ENCODE measurements at regions of chr16 and their contacts with region 1.

Region 1: GRCh38 chr16:69123910-69124309 is 8.5 kb downstream of the CHTF8 start:
- ATAC-seq: peak in 3 of 8 experiments; percentile 55 to 71 (median 67)
- H3K4me3 ChIP-seq: no peak overlapping the region
- H3K27ac ChIP-seq: no peak overlapping the region
- H3K4me1 ChIP-seq: no peaks in the 10 kb centered on the region

Region 2: GRCh38 chr16:68528686-68529379 is 595.1 kb before region 1 on chr16:
- in situ Hi-C with region 1: loop called in 2 of 9 experiments (anchors 25 kb)
- ATAC-seq: peak; percentile 72 to 84 (median 75)
- H3K4me3 ChIP-seq: peak overlapping the region in 2 of 5 donors; percentile 0 to 1
- H3K27ac ChIP-seq: no peak overlapping the region
- H3K4me1 ChIP-seq: peaks cover 5 to 8% of the 10 kb centered on the region in 2 donors

Region 3: DNA sequence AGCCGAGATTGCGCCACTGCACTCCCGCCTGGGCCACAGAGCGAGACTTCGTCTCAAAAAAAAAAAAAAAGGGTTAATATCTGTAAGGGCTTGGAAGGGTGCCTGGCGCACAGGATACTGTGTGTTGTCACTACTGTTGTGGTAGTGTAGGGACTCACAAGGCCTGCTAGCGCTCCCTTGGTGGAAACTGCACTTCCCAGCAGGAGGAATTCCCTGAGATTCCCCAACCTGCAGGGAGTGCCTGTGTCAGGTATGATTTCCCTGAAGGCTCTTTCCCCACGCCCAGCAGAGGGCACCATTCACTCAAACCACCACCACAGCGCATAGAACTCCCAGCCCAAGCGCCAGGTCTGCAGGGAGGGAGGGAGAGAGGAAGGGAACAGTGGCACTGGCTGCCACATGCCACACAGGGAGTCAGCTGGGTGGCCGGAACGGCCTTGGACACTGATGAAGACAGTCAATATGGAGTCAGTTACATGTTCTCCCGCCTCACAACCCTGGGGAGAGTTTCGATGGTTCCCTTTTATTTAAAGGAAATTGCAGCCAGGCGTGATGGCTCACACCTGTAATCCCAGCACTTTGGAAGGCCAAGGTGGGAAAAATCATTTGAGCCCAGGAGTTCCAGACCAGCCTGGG is 419.6 kb before region 1 on chr16:
- in situ Hi-C with region 1: loop called in 1 of 9 experiments (anchors 25 kb)
- ATAC-seq: peak; percentile 52 to 89 (median 68)
- H3K4me3 ChIP-seq: no peak overlapping the region
- H3K27ac ChIP-seq: no peak overlapping the region
- H3K4me1 ChIP-seq: no peaks in the 10 kb centered on the region

Region 4: DNA sequence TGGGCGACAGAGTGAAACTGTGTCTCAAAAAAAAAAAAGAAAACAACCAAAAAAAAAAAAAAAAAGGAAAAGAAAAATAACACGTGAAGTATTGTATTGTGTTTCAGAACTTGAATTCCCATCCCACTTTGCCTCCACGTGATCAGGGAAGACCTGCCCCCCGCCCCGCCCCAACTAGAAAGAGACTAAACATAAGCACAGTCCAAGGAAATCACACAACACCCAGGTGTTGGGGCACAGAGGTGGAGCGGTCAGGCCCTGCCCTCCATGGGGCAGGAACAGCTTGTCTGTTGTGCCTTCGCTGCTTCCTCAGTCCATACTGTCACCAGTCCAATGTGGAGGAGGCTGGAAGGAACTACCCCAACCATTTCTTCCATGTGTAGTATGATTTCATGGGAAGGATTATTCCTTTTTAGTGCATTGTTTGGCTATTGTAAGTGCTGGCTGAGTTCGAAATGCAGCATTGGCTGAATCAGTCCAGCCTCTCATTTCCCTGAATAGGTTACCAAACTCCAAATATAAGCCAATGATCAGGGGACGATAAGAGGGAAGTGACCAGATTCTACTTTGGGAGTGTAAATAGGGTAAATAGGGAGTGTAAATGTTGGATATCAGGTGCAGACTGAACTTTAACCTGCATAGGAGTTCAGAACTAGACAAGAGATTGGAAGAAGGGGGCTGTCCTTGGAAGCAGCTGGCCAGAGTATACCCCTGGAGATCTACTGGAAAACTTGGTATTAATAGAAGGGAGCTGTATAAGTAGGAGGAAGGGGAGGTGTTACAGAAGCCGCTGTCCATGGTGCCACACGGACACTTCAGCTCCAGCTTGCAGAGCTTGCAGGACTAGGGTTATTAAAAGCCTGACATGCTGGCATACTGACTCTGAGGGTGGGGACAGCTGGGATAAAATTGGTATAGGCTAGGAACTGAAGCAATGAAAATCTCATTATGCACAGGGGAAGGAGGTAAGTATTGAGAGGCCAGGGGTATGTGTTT is 229.9 kb before region 1 on chr16:
- in situ Hi-C with region 1: loop called in 2 of 9 experiments (anchors 25 kb)
- ATAC-seq: peak in 4 of 8 experiments; percentile 26 to 69 (median 54)
- H3K4me3 ChIP-seq: no peak overlapping the region
- H3K27ac ChIP-seq: no peak overlapping the region
- H3K4me1 ChIP-seq: no peaks in the 10 kb centered on the region

Region 5: DNA sequence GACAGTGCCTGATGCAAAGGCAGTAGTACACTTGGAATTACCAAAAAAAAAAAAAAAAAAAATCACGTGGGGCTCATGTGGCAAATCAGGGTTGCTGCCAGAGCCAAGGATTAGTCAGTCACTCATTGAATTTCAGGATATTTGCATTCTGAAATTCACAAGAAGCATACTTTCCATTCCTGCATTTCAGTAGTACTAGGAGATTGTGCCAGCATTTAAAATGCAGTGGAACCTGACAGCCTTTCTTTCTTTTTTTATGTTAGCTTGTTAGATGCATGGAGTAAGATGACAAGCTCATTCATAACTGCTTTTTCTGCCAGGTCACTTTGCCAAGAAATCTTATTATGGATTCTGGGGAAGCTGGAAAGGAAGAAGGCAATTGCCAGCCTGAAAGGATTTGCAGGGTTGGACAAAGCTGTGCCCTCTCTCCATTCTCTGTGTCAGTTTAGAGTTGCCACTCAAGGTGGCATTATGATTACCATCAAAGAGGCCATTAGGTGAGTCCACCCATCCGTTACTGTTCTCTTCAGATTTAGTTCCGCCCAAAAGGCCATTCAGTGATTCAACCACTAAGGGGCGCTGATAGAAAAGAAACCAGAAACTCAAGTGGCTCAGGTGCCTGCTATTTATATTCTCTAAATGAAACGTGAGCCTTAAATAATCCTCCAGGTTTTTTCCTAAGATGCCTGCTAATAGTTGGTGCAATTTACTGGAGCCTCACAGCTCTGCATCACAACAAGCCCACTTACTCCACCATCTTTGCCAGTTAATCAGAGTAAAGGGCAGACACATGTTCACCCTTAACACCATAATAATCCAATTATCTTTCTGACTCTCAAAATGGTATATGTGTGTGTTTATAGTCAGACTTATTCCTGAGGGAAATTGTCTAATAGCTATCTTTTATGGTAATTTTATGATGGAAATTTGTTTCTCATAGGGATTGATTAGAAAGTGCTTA is 221.6 kb before region 1 on chr16:
- in situ Hi-C with region 1: loop called in 5 of 9 experiments (anchors 10 to 25 kb)
- ATAC-seq: peak; percentile 74 to 98 (median 86)
- H3K4me3 ChIP-seq: no peak overlapping the region
- H3K27ac ChIP-seq: no peak overlapping the region
- H3K4me1 ChIP-seq: peaks cover 0 to 10% of the 10 kb centered on the region in 2 donors